Left ventricle myocardium inferior (tissue), 1 donor: ENCODE measurements at regions of chr7 and their contacts with region 1.

Region 1: GRCh38 chr7:50679218-50680007 is 103.3 kb downstream of the GRB10 start:
- DNase-seq: no peak
- H3K4me3 ChIP-seq: no peak overlapping the region
- H3K27ac ChIP-seq: no peak overlapping the region
- H3K4me1 ChIP-seq: peaks cover 72% of the 10 kb centered on the region
- H3K27me3 ChIP-seq: no peaks in the 10 kb centered on the region
- CTCF ChIP-seq: peak; percentile 61

Region 2: GRCh38 chr7:50475340-50475739 is 204.1 kb before region 1 on chr7:
- intact Hi-C with region 1: loop called (anchors 10 kb)
- DNase-seq: no peak
- H3K4me3 ChIP-seq: no peak overlapping the region
- H3K27ac ChIP-seq: no peak overlapping the region
- H3K4me1 ChIP-seq: no peaks in the 10 kb centered on the region
- H3K27me3 ChIP-seq: peaks cover 22% of the 10 kb centered on the region
- CTCF ChIP-seq: no peak

Region 3: DNA sequence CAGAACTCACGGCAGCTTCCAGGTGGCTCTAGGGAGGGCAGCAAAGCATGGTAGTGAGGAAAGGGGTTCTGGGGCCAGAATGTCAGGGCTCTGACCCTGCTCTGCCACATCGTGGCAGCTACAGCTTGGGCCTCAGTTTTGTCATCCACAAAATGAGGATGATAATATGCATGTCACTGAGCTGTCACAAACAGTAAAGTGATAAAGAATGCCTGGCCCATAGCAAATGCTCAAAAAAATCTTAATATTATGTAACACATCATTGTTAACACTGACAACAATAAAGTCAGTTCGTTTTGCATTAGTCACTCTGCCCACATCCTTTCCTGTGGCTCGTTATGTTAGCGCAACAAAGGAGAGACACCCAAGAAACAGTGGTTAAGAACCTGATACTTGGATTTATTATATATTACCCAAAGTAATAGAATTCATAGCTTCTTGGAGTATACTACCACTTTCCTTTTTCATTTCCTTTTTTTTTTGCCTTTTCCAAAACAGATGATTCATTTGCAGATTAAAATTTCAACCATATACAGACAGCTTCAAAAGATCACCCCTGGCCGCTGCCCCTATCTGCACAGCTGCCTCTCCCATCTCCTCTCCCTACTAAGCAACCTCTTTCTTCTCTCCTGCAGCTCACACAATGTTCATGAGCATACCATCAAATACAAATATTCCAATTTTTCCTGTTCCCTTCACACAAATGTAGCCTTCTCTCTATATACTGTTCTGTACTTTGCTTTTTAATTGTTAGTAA is 68.7 kb before region 1 on chr7:
- intact Hi-C with region 1: loop called (anchors 10 kb)
- DNase-seq: no peak
- H3K4me3 ChIP-seq: no peak overlapping the region
- H3K27ac ChIP-seq: no peak overlapping the region
- H3K4me1 ChIP-seq: peaks cover 6% of the 10 kb centered on the region
- H3K27me3 ChIP-seq: no peaks in the 10 kb centered on the region
- CTCF ChIP-seq: no peak